ENCODE measurements at regions of chr12 and their contacts with region 1.

Region 1: GRCh38 chr12:47397664-47398281 is 308.1 kb downstream of the RPAP3 start:
- DNase-seq: no peak
- ATAC-seq: peak; percentile 72
- H3K4me3 Mint-ChIP-seq: peak overlapping the region; percentile 61
- H3K27ac Mint-ChIP-seq: peak overlapping the region; percentile 94
- H3K4me1 Mint-ChIP-seq: peaks cover 92% of the 10 kb centered on the region
- H3K27me3 Mint-ChIP-seq: no peaks in the 10 kb centered on the region
- CTCF ChIP-seq: no peak

Region 2: GRCh38 chr12:46382964-46383653 is 1014.7 kb before region 1 on chr12:
- CTCF ChIA-PET with region 1: no interaction called
- POLR2A ChIA-PET with region 1: no interaction called
- intact Hi-C with region 1: loop called (anchors 10 kb)
- DNase-seq: peak; percentile 92
- ATAC-seq: peak; percentile 69
- H3K4me3 Mint-ChIP-seq: peak overlapping the region; percentile 91
- H3K27ac Mint-ChIP-seq: peak overlapping the region; percentile 94
- H3K4me1 Mint-ChIP-seq: peaks cover 46% of the 10 kb centered on the region
- H3K27me3 Mint-ChIP-seq: no peaks in the 10 kb centered on the region
- CTCF ChIP-seq: no peak

Region 3: GRCh38 chr12:47079468-47079980 is 318.2 kb before region 1 on chr12 and contains the starts of genes AMIGO2 and PCED1B:
- CTCF ChIA-PET with region 1: interaction called, 45 read pairs
- POLR2A ChIA-PET with region 1: interaction called, 45 read pairs
- intact Hi-C with region 1: loop called (anchors 1 kb)
- DNase-seq: no peak
- ATAC-seq: peak; percentile 47
- H3K4me3 Mint-ChIP-seq: peak within 1 kb of the TSS; percentile 99
- H3K27ac Mint-ChIP-seq: peak within 1 kb of the TSS; percentile 95
- H3K4me1 Mint-ChIP-seq: peaks cover 67% of the 10 kb centered on the region
- H3K27me3 Mint-ChIP-seq: no peaks in the 10 kb centered on the region
- CTCF ChIP-seq: no peak
- total RNA-seq, gene AMIGO2: 13.9 and 14.1 TPM in 2 replicates
- total RNA-seq, gene PCED1B: 60.9 and 65.4 TPM in 2 replicates

Region 4: DNA sequence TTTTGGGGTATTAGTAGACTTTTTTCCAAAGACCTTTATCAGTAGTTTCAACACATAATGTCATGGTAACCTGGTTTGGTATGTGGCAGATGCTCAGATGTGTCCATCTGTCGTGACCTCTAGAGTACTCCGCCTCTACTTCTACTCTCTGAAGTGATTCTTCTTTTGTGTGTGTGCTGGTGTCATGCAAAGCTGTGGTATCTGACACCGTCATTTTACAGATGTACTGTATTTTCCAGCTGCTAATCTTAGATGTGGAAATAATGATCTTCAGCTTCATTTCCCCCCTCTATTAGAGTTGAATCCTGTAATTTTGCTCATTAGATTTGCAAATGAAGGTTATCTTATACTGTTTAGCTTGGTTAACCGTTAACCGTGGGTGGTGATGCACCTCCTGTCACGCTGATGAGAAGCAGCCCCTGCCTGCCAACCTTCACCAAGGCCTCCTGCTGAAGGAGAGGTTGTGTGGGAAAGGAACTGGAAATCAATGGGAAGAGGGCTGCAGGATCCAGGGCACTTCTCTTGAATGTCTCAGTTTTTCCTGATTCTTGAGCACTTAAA is 95.6 kb before region 1 on chr12:
- CTCF ChIA-PET with region 1: interaction called, 59 read pairs
- POLR2A ChIA-PET with region 1: interaction called, 81 read pairs
- intact Hi-C with region 1: loop called (anchors 1 kb)
- DNase-seq: no peak
- ATAC-seq: peak; percentile 74
- H3K4me3 Mint-ChIP-seq: peak overlapping the region; percentile 38
- H3K27ac Mint-ChIP-seq: peak overlapping the region; percentile 59
- H3K4me1 Mint-ChIP-seq: peaks cover 59% of the 10 kb centered on the region
- H3K27me3 Mint-ChIP-seq: no peaks in the 10 kb centered on the region
- CTCF ChIP-seq: no peak

Region 5: GRCh38 chr12:47356129-47356700 is 41.6 kb before region 1 on chr12:
- CTCF ChIA-PET with region 1: interaction called, 45 read pairs
- POLR2A ChIA-PET with region 1: interaction called, 83 read pairs
- intact Hi-C with region 1: loop called (anchors 1 kb)
- DNase-seq: no peak
- ATAC-seq: peak; percentile 77
- H3K4me3 Mint-ChIP-seq: peak overlapping the region; percentile 51
- H3K27ac Mint-ChIP-seq: peak overlapping the region; percentile 97
- H3K4me1 Mint-ChIP-seq: peaks cover 85% of the 10 kb centered on the region
- H3K27me3 Mint-ChIP-seq: no peaks in the 10 kb centered on the region
- CTCF ChIP-seq: no peak

Region 6: GRCh38 chr12:47383942-47384341 is 13.8 kb before region 1 on chr12:
- CTCF ChIA-PET with region 1: interaction called, 5 read pairs
- POLR2A ChIA-PET with region 1: interaction called, 10 read pairs
- intact Hi-C with region 1: no loop called
- DNase-seq: no peak
- ATAC-seq: peak; percentile 18
- H3K4me3 Mint-ChIP-seq: peak overlapping the region; percentile 21
- H3K27ac Mint-ChIP-seq: peak overlapping the region; percentile 78
- H3K4me1 Mint-ChIP-seq: peaks cover 64% of the 10 kb centered on the region
- H3K27me3 Mint-ChIP-seq: no peaks in the 10 kb centered on the region
- CTCF ChIP-seq: no peak

Region 7: DNA sequence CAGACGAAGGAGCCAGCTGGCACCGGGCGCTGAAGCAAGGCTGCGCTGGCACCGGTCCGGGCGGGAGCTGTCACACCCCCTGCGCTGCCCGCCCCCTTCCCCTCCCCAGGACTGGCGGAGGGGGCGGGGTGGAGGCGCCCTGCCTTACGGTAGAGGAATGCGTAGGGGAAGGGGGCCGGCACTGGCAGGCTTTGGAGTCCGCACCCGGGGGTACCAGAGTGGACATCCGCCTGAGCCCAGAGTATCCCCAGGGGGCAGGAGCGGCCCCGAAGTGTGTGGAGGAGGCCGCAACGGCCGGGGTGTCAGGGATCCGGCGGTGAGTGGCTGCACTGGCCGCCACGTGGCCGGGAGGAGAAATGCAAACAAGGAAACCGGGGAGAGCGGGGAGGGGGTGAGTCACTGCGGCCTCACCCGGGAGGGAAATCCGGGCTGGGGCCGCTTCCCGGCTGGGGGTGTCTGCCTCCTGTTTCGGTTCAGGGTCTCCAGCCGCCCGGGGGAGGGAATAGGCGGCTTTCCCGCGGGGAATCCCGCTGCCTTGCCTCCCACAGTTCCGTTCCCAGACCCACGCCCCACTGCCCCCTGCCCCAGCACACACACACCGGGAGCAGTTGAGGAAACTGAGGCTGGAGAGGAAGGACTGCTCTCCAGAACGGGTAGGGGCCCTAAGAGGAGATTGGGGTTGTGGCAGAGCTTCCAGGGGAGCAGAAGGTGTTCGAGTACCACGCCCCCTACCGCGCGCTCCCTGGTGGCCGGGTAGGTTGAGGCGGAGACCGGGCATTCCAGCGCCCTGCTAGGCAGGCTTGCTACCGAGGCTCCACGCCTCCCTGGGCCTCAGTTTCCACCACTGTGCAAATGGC is 361.3 kb after region 1 on chr12 and contains the start of gene RAPGEF3:
- CTCF ChIA-PET with region 1: no interaction called
- POLR2A ChIA-PET with region 1: no interaction called
- intact Hi-C with region 1: loop called (anchors 5 kb)
- DNase-seq: peak; percentile 64
- ATAC-seq: peak; percentile 73
- H3K4me3 Mint-ChIP-seq: peak within 1 kb of the TSS; percentile 81
- H3K27ac Mint-ChIP-seq: no peak within 1 kb of the TSS
- H3K4me1 Mint-ChIP-seq: peaks cover 60% of the 10 kb centered on the region
- H3K27me3 Mint-ChIP-seq: no peaks in the 10 kb centered on the region
- CTCF ChIP-seq: no peak
- total RNA-seq, gene RAPGEF3: 2.7 and 5.0 TPM in 2 replicates

Measured in activated B cell treated with CpG ODN at 0.5 μM for 24 hours (primary cell).